ENCODE measurements at regions of chr9 and their contacts with region 1.

Region 1: DNA sequence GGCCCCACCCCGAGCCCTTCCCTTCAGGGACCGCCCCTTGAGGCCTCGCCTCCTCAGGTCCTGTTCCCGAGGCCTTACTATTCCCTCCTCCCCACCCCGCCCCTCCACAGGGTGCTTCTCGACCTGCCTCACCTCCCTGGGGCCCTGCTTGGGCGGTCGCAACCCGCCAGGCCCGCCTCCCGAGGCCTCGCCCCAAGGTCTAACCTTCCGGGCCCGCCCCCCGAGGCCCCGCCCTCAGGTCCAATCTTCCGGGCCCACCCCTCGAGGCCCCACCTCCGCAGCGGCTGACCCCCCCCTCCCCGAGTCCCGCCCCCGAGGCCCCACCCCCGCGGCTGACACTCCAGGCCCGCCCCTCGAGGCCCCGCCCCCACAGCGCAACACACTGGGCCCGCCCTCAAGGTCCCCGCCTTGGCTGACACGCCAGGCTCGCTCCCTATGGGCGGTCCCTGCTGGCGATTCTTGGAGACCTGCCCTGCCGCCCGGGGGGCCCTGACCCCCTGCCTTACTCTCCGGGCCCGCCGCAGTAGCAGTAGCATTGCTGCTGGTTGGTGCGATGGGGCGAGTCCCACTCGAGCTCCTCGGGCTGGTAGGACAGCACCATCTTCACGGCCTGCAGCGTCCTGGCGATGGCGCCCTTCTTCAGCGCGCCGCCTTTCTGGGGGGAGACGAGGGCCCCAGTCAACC is 8.2 kb downstream of the PHF19 start:
- DNase-seq: peak; percentile 93 to 99 (median 96)
- H3K4me3 ChIP-seq: peak overlapping the region; percentile 68
- H3K4me3 Mint-ChIP-seq: peak overlapping the region; percentile 92 to 98 (median 93)
- H3K27ac ChIP-seq: peak overlapping the region; percentile 88
- H3K27ac Mint-ChIP-seq: peak overlapping the region; percentile 94 to 98 (median 96)
- H3K4me1 ChIP-seq: peaks cover 15% of the 10 kb centered on the region
- H3K4me1 Mint-ChIP-seq: peaks cover 13 to 43% (median 20%) of the 10 kb centered on the region in 3 donors
- H3K27me3 ChIP-seq: no peaks in the 10 kb centered on the region
- H3K27me3 Mint-ChIP-seq: no peaks in the 10 kb centered on the region

Region 2: DNA sequence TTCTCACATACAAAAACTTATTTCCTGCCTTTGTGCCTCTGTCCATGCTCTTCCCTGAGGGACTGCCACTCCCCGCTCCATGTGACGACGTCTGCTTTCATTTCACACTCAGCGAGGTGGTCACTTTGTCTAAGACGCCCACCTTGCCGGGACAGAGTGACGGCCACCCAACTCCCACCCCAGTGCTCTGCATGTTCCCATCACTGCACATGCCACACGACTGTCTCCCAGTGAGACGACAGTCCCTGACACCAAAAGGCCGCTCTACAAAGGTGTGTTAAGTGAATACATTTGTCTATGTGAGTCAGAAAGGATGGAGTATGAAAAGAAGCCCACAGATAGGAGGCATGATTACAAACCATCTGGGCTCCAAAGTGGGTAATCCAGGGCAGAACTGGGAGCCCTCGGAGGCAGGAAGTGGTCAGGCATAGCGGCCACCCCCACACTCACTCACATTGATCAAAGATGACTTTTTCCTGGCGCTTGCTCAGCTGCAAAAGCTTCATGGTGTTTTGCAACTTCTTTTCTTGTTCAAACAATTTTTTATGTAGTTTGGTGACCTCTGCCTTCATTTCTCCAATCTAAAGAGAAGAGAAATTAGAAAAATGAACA is 474.7 kb before region 1 on chr9:
- CTCF ChIA-PET with region 1: no interaction called
- POLR2A ChIA-PET with region 1: no interaction called
- DNase-seq: no peak
- H3K4me3 ChIP-seq: no peak overlapping the region
- H3K4me3 Mint-ChIP-seq: peak overlapping the region in 4 of 7 donors; percentile 4 to 58 (median 15)
- H3K27ac ChIP-seq: no peak overlapping the region
- H3K27ac Mint-ChIP-seq: peak overlapping the region; percentile 36 to 92 (median 74)
- H3K4me1 ChIP-seq: peaks cover 15% of the 10 kb centered on the region
- H3K4me1 Mint-ChIP-seq: peaks cover 21 to 32% (median 31%) of the 10 kb centered on the region in 3 donors
- H3K27me3 ChIP-seq: no peaks in the 10 kb centered on the region
- H3K27me3 Mint-ChIP-seq: no peaks in the 10 kb centered on the region

Region 3: GRCh38 chr9:120755827-120756434 is 112.9 kb before region 1 on chr9:
- CTCF ChIA-PET with region 1: interaction called, 11 read pairs
- POLR2A ChIA-PET with region 1: no interaction called
- DNase-seq: peak; percentile 42 to 73 (median 60)
- H3K4me3 ChIP-seq: no peak overlapping the region
- H3K4me3 Mint-ChIP-seq: no peak overlapping the region
- H3K27ac ChIP-seq: no peak overlapping the region
- H3K27ac Mint-ChIP-seq: peak overlapping the region in 7 of 8 donors; percentile 12 to 68 (median 54)
- H3K4me1 ChIP-seq: no peaks in the 10 kb centered on the region
- H3K4me1 Mint-ChIP-seq: peaks cover 0 to 3% (median 0%) of the 10 kb centered on the region in 3 donors
- H3K27me3 ChIP-seq: no peaks in the 10 kb centered on the region
- H3K27me3 Mint-ChIP-seq: no peaks in the 10 kb centered on the region

Region 4: GRCh38 chr9:120892748-120893610 is 24.2 kb after region 1 on chr9:
- CTCF ChIA-PET with region 1: interaction called, 18 read pairs
- POLR2A ChIA-PET with region 1: interaction called, 37 read pairs
- DNase-seq: peak; percentile 34 to 83 (median 59)
- H3K4me3 ChIP-seq: peak overlapping the region; percentile 4
- H3K4me3 Mint-ChIP-seq: peak overlapping the region; percentile 1 to 90 (median 74)
- H3K27ac ChIP-seq: no peak overlapping the region
- H3K27ac Mint-ChIP-seq: peak overlapping the region; percentile 67 to 98 (median 96)
- H3K4me1 ChIP-seq: peaks cover 88% of the 10 kb centered on the region
- H3K4me1 Mint-ChIP-seq: peaks cover 57 to 91% (median 63%) of the 10 kb centered on the region in 3 donors
- H3K27me3 ChIP-seq: no peaks in the 10 kb centered on the region
- H3K27me3 Mint-ChIP-seq: no peaks in the 10 kb centered on the region

Region 5: DNA sequence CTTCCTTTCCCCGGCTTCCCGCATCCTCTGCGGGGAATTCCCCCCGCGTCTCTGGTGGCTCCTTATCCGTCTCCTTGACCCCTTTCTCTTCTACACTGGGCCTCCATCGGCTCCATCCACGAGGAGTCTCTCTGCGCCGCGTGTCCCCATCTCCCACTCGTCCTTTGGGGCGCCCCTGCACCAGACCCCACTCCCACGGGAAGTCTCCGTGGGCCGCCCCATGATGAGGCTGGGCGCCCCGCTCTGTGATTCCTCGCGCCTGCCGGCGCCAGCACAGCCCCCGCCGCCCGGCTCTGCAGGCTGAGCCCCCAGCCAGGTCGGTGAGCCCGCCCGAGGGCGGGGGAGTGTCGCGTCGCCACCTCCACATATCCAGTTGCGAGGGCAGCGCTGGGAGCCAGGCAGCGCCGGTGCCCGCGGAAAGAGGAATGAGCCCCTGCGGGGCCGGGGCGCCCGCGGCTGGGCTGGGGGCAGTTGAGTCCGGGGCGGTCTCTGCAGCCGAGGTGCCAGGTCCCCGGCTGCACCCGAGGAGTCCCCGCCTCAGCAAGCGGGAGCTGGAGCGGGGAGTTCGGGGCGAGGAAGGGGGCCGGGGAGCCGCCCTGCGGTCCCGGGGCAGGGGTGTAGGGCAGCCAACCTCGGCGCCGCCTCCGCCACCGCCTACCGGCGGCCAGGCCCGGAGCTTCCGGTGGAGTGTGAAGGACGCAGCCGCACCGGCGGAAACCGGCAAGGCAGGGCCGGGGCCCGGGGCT is 59.8 kb after region 1 on chr9:
- CTCF ChIA-PET with region 1: interaction called, 363 read pairs
- POLR2A ChIA-PET with region 1: interaction called, 18 read pairs
- DNase-seq: peak; percentile 65 to 89 (median 79)
- H3K4me3 ChIP-seq: peak overlapping the region; percentile 76
- H3K4me3 Mint-ChIP-seq: peak overlapping the region; percentile 91 to 99 (median 96)
- H3K27ac ChIP-seq: peak overlapping the region; percentile 85
- H3K27ac Mint-ChIP-seq: peak overlapping the region; percentile 95 to 100 (median 99)
- H3K4me1 ChIP-seq: peaks cover 86% of the 10 kb centered on the region
- H3K4me1 Mint-ChIP-seq: peaks cover 82 to 90% (median 85%) of the 10 kb centered on the region in 3 donors
- H3K27me3 ChIP-seq: no peaks in the 10 kb centered on the region
- H3K27me3 Mint-ChIP-seq: no peaks in the 10 kb centered on the region

Region 6: GRCh38 chr9:121071756-121072421 is 203.1 kb after region 1 on chr9:
- CTCF ChIA-PET with region 1: interaction called, 10 read pairs
- POLR2A ChIA-PET with region 1: no interaction called
- DNase-seq: peak; percentile 12 to 51 (median 24)
- H3K4me3 ChIP-seq: peak overlapping the region; percentile 72
- H3K4me3 Mint-ChIP-seq: peak overlapping the region; percentile 93 to 100 (median 97)
- H3K27ac ChIP-seq: peak overlapping the region; percentile 49
- H3K27ac Mint-ChIP-seq: peak overlapping the region; percentile 68 to 96 (median 94)
- H3K4me1 ChIP-seq: peaks cover 27% of the 10 kb centered on the region
- H3K4me1 Mint-ChIP-seq: peaks cover 44 to 63% (median 55%) of the 10 kb centered on the region in 3 donors
- H3K27me3 ChIP-seq: no peaks in the 10 kb centered on the region
- H3K27me3 Mint-ChIP-seq: no peaks in the 10 kb centered on the region